ENCODE measurements at regions of chr16 and their contacts with region 1.

Region 1: DNA sequence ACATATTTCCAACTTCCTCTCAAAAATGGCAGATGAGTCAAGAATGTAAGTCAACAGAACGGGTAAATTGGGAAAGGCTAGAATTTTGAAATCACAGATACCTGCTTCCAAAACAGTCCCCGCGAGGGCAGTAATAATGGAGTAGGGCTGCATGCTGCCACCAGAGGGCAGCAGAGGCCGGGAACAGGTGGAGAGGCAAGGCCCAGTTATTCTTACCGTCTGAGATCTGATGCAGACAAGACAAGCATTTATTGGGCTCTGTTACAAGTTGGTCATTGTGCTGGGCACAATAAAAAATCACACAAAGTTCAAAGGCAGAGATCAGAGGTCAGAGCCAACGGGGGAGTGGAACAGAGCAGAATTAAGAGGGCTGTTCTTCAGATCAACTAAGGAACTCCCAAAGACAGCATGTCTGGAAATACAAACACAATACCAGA is 8.8 kb upstream of the MLKL start:
- DNase-seq: peak; percentile 70 to 79 (median 78)
- H3K4me3 ChIP-seq: no peak overlapping the region
- H3K4me3 Mint-ChIP-seq: no peak overlapping the region
- H3K27ac ChIP-seq: no peak overlapping the region
- H3K27ac Mint-ChIP-seq: peak overlapping the region in 5 of 7 donors; percentile 44 to 93 (median 58)
- H3K4me1 ChIP-seq: no peaks in the 10 kb centered on the region
- H3K4me1 Mint-ChIP-seq: peaks cover 4 to 6% (median 6%) of the 10 kb centered on the region in 4 donors
- H3K27me3 ChIP-seq: no peaks in the 10 kb centered on the region
- H3K27me3 Mint-ChIP-seq: no peaks in the 10 kb centered on the region

Region 2: DNA sequence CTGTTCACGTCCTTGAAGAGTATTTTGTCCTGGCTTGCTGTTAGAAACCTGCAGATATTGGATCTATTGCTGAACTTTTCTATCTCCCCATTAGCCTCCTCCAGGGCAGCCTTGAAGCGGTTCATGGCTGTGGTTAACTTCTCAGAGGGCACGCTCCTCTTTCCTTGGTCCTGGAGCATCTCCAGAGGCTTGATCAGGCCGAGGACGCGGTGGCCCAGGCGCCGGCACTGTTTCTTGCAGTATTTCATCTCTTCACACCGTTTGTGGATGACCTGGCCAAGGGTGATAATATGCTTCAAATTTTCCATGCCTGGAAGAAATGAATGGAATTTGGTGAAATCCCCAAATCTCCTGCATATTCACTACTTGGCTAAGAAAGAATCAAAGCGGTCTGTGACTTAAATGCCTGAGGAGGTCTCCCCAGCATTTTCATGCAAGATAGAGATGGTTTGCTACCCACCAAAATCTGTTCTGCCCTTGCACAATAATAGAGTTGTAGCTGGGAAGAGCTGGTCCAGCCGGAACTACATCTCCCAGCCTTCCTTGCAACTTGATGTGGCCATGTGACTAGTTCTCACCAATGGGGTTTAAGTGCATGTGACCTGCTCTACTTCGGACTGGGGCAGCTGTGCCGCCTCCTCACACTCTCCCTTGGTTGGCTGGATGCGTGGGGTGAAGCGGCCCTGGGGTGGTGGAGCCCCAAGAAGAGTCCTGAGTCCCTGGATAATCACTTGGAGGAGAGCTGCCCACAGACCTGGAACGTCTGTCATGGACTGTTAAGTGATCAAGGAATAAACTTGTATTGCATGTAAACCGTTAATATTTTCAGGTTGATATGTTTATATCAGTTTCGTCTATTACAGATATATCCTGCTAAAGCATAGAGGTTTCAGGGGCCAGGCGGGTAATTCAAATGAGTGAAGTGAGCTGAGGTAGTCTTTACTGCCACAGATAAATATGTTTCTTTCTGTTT is 13.7 kb before region 1 on chr16:
- CTCF ChIA-PET with region 1: interaction called, 70 read pairs
- POLR2A ChIA-PET with region 1: interaction called, 8 read pairs
- intact Hi-C with region 1: no loop called
- DNase-seq: peak; percentile 63 to 72 (median 67)
- H3K4me3 ChIP-seq: peak overlapping the region; percentile 24 to 46
- H3K4me3 Mint-ChIP-seq: peak overlapping the region; percentile 79 to 88 (median 86)
- H3K27ac ChIP-seq: peak overlapping the region; percentile 0
- H3K27ac Mint-ChIP-seq: peak overlapping the region; percentile 53 to 90 (median 84)
- H3K4me1 ChIP-seq: peaks cover 34% of the 10 kb centered on the region
- H3K4me1 Mint-ChIP-seq: peaks cover 31 to 66% (median 48%) of the 10 kb centered on the region in 4 donors
- H3K27me3 ChIP-seq: no peaks in the 10 kb centered on the region
- H3K27me3 Mint-ChIP-seq: no peaks in the 10 kb centered on the region

Region 3: GRCh38 chr16:74743668-74744299 is 34.3 kb after region 1 on chr16:
- CTCF ChIA-PET with region 1: no interaction called
- POLR2A ChIA-PET with region 1: no interaction called
- intact Hi-C with region 1: no loop called
- DNase-seq: no peak
- H3K4me3 ChIP-seq: no peak overlapping the region
- H3K4me3 Mint-ChIP-seq: no peak overlapping the region
- H3K27ac ChIP-seq: no peak overlapping the region
- H3K27ac Mint-ChIP-seq: no peak overlapping the region
- H3K4me1 ChIP-seq: no peaks in the 10 kb centered on the region
- H3K4me1 Mint-ChIP-seq: no peaks in the 10 kb centered on the region
- H3K27me3 ChIP-seq: no peaks in the 10 kb centered on the region
- H3K27me3 Mint-ChIP-seq: peaks cover 0 to 3% of the 10 kb centered on the region in 2 donors

Region 4: DNA sequence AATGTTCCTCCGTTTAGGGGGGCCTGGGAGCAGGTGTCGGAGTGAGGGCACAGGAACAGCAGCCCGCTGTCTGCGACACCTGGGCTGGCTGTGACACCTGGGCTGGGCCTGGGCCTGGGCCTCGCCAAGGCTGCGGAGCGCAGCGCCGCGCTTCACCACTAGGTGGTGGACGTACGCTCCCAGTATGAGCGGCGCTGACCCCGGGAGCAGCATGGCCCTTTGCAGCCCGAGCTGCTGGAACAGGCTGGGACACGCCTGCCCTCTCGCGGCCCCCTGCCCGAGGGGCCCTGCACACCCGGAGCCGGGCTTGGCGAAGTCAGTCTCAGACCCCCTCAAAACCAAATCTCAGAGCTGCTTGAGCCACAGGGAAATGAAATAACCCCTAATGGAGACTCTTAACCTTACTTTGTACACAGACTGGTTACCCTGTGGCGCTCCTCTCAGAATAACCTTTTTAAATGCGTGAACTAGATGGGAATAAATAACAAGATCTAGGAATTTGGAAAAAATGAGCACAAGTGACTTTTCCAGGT is 103.7 kb after region 1 on chr16:
- CTCF ChIA-PET with region 1: interaction called, 4 read pairs
- POLR2A ChIA-PET with region 1: no interaction called
- intact Hi-C with region 1: loop called (anchors 1 kb)
- DNase-seq: peak; percentile 51 to 72 (median 60)
- H3K4me3 ChIP-seq: no peak overlapping the region
- H3K4me3 Mint-ChIP-seq: peak overlapping the region in 3 of 8 donors; percentile 10 to 47 (median 46)
- H3K27ac ChIP-seq: no peak overlapping the region
- H3K27ac Mint-ChIP-seq: no peak overlapping the region
- H3K4me1 ChIP-seq: peaks cover 4% of the 10 kb centered on the region
- H3K4me1 Mint-ChIP-seq: no peaks in the 10 kb centered on the region
- H3K27me3 ChIP-seq: no peaks in the 10 kb centered on the region
- H3K27me3 Mint-ChIP-seq: peaks cover 2 to 4% of the 10 kb centered on the region in 2 donors

Region 5: GRCh38 chr16:74931445-74931844 is 222.0 kb after region 1 on chr16:
- CTCF ChIA-PET with region 1: interaction called, 3 read pairs
- POLR2A ChIA-PET with region 1: no interaction called
- intact Hi-C with region 1: loop called (anchors 5 kb)
- DNase-seq: no peak
- H3K4me3 ChIP-seq: no peak overlapping the region
- H3K4me3 Mint-ChIP-seq: no peak overlapping the region
- H3K27ac ChIP-seq: no peak overlapping the region
- H3K27ac Mint-ChIP-seq: no peak overlapping the region
- H3K4me1 ChIP-seq: no peaks in the 10 kb centered on the region
- H3K4me1 Mint-ChIP-seq: peaks cover 0 to 1% (median 0%) of the 10 kb centered on the region in 4 donors
- H3K27me3 ChIP-seq: no peaks in the 10 kb centered on the region
- H3K27me3 Mint-ChIP-seq: no peaks in the 10 kb centered on the region